A549 (cell line): ENCODE measurements at regions of chr2 and their contacts with region 1.

Region 1: DNA sequence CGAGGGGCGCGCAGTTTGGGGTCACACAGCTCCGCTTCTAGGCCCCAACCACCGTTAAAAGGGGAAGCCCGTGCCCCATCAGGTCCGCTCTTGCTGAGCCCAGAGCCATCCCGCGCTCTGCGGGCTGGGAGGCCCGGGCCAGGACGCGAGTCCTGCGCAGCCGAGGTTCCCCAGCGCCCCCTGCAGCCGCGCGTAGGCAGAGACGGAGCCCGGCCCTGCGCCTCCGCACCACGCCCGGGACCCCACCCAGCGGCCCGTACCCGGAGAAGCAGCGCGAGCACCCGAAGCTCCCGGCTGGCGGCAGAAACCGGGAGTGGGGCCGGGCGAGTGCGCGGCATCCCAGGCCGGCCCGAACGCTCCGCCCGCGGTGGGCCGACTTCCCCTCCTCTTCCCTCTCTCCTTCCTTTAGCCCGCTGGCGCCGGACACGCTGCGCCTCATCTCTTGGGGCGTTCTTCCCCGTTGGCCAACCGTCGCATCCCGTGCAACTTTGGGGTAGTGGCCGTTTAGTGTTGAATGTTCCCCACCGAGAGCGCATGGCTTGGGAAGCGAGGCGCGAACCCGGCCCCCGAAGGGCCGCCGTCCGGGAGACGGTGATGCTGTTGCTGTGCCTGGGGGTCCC is at the start of gene ITGA4:
- DNase-seq: peak; percentile 36 to 52
- ATAC-seq: peak; percentile 98 to 100
- H3K4me3 ChIP-seq: peak within 1 kb of the TSS; percentile 57
- H3K27ac ChIP-seq: peak within 1 kb of the TSS; percentile 54 to 81; a peak in 5 of 6 replicates
- H3K4me1 ChIP-seq: no peaks in the 10 kb centered on the region
- CTCF ChIP-seq: peak; percentile 64
- EP300 ChIP-seq: no peak
- POLR2A ChIP-seq: no peak
- RAD21 ChIP-seq: peak; percentile 58 to 78
- polyA plus RNA-seq, gene ITGA4: 1.4 and 1.7 TPM in 2 replicates

Region 2: DNA sequence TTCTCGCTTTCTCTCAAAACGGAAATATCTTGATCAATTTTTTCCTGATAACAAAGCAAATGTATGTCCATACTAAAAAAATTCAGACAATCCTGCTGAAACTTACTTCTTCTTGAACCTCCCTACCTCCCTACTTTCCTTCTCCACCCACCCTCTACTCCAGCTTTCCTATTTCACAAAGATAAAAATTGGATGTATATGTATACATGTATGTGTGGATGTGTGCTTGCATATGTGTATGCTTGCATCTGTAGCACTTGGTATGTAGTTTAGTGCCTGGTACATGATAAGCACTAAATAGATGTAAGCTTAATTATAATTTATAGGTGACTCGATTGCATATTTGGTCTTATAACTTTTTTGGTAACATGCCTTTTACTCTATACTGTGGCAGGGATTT is 167.5 kb before region 1 on chr2:
- CTCF ChIA-PET with region 1: no interaction called
- POLR2A ChIA-PET with region 1: no interaction called
- DNase-seq: no peak
- ATAC-seq: no peak
- H3K4me3 ChIP-seq: no peak overlapping the region
- H3K27ac ChIP-seq: no peak overlapping the region
- H3K4me1 ChIP-seq: no peaks in the 10 kb centered on the region
- CTCF ChIP-seq: no peak
- EP300 ChIP-seq: no peak
- POLR2A ChIP-seq: no peak
- RAD21 ChIP-seq: no peak

Region 3: DNA sequence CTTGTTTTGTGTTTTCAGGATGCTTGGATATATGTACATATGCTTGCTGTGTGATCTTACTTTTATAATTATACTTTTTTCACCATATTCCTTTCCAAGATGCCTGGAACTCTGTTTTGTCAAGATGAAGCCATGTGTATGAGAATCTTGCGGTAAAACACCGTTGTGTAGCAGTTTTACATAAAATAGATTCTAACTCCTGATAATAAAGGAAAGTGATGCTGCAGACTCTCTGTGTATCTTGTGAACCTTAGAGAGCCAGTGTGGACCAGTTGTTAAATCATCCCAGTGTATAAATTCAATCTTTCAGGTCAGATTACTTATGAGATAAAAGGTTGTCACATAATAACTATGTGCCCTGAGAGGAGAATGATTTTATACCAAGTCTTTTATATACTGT is 12.6 kb before region 1 on chr2:
- CTCF ChIA-PET with region 1: interaction called, 12 read pairs
- POLR2A ChIA-PET with region 1: no interaction called
- DNase-seq: no peak
- ATAC-seq: no peak
- H3K4me3 ChIP-seq: no peak overlapping the region
- H3K27ac ChIP-seq: no peak overlapping the region
- H3K4me1 ChIP-seq: no peaks in the 10 kb centered on the region
- CTCF ChIP-seq: no peak
- EP300 ChIP-seq: no peak
- POLR2A ChIP-seq: no peak
- RAD21 ChIP-seq: no peak